WTC11 (cell line): ENCODE measurements at regions of chr11 and their contacts with region 1.

Region 1: DNA sequence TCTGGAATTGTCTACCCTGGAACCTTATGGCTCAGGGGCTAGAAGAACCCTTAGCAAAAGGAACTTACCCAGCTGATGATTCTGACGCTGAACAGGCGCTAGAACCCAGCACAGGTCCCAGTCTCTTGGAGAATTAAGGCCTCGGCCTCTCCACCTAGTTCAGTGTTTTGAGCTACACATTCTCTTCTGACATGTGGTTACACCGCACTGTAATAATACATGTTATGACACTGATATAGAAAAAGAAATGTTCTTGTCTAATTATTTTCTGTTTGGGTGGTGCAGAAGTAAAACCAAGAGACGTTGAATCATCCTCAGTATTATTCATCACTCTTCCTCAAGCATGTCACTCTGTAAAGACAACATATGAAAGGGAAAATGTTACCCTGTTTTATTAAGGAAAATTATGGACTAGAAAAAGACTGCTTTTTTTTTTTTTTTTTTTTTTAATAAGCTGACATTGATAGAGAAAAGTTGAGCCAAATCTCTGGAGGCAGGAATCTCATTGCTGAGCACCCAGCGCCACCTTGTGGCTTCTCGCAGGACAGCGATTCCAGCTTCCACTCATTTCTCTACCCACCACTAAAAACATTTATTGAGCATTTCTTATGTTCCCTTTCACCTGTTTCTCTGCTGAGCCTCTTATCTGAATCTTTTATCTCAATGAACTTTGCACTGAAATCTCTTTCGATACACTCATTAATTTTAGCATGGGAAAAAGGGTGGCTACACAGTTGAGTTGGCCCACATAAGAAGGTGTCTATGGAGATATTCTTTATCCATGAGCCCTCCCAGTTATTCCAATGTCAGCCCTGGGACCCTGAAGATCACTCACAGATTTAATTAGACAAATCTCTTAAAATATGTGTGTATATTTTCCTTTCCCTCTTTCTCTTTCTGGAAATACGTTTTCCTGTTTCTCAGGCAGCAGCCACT is 12.6 kb upstream of the APLNR start:
- DNase-seq: peak; percentile 74
- ATAC-seq: peak; percentile 15; the same call in 1 of the 2 replicates
- H3K4me3 Mint-ChIP-seq: no peak overlapping the region
- H3K27ac Mint-ChIP-seq: no peak overlapping the region
- H3K4me1 Mint-ChIP-seq: no peaks in the 10 kb centered on the region; the same call in 1 of the 2 replicates
- H3K27me3 Mint-ChIP-seq: no peaks in the 10 kb centered on the region
- CTCF ChIP-seq: peak; percentile 85

Region 2: DNA sequence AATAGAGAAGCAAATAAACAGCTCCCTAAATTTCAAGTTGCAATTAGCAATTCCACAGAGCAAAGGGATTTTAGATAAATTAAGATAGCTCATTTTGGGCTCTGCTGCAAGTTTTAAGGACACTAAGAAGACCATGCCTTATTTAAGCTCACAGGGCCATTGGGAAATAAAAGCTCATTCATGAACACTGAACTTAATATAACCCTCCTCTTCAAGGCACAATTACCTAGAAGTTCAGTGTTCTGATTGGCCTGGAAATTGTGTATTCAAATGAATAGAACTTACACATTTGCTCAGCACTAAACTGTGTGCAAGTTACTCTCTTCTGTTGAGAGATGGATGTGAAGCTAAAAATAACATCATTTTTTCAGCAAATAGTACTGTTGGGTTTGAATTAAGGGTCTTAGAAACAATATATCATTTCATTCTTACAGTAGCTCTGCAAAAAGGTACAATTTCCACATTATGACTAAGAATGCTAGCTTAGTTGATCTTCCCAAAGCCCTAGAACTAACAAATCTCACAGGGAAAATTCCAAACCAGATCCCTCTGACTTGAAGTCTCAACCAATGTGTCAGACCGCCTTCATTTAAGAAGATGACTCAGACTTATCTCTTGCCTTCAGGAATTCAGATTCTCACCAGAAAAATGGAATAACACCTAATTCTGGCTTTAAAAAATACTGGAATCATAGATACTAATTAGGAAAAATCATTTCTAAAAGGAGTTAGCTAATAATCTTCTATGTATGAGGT is 155.3 kb before region 1 on chr11:
- CTCF ChIA-PET with region 1: interaction called, 16 read pairs
- POLR2A ChIA-PET with region 1: no interaction called
- DNase-seq: no peak
- ATAC-seq: no peak
- H3K4me3 Mint-ChIP-seq: no peak overlapping the region
- H3K27ac Mint-ChIP-seq: no peak overlapping the region
- H3K4me1 Mint-ChIP-seq: no peaks in the 10 kb centered on the region
- H3K27me3 Mint-ChIP-seq: no peaks in the 10 kb centered on the region
- CTCF ChIP-seq: no peak

Region 3: GRCh38 chr11:57150454-57150917 is 99.2 kb before region 1 on chr11:
- CTCF ChIA-PET with region 1: interaction called, 31 read pairs
- POLR2A ChIA-PET with region 1: no interaction called
- DNase-seq: no peak
- ATAC-seq: no peak
- H3K4me3 Mint-ChIP-seq: no peak overlapping the region
- H3K27ac Mint-ChIP-seq: no peak overlapping the region
- H3K4me1 Mint-ChIP-seq: peaks cover 16% of the 10 kb centered on the region
- H3K27me3 Mint-ChIP-seq: no peaks in the 10 kb centered on the region; the same call in 1 of the 2 replicates
- CTCF ChIP-seq: no peak

Region 4: DNA sequence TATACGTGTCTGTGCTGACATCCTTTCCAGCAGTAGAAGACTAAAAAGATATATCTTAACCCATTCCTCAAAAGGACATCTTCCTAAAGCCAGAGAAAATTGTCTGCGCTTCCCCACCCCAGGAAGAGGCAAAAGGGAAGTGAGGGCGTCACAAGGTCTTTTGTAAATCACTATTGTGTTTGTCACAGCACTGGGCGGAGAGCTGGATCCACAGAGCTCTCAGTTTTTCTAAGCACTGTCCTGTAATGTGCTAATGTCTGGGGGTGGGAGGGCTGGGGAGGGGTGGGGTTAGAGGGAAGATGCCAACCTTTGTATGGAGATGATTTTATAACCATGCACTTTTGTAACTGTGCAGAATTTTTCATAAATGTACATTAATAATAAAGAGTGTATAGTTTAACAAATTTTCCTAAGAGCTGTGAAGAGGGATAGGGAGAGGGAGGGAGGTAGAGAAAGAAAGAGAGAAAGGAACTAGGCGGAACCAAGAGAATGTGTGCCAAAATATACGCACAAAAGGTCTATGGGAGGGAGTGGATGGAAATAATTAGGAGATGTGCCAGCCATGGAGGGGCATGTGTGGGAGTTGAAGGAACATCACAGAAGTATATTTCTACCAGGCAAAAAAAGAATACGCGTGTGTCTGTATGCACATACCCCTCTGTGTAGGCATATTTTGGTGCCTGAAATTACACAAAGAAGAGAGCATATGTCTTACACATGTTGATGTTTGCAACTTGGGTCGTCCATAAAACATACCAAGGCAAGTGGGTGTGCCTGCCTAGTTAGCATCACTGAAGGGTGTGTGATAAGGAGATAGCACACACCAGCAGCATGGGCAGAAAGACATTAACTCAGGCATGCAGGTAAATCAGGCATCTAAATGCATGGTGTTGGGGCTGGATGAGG is 58.1 kb before region 1 on chr11:
- CTCF ChIA-PET with region 1: interaction called, 11 read pairs
- POLR2A ChIA-PET with region 1: no interaction called
- DNase-seq: no peak
- ATAC-seq: peak; percentile 51
- H3K4me3 Mint-ChIP-seq: no peak overlapping the region
- H3K27ac Mint-ChIP-seq: no peak overlapping the region
- H3K4me1 Mint-ChIP-seq: peaks cover 24% of the 10 kb centered on the region
- H3K27me3 Mint-ChIP-seq: no peaks in the 10 kb centered on the region; the same call in 1 of the 2 replicates
- CTCF ChIP-seq: no peak

Region 5: GRCh38 chr11:57230791-57231538 is 18.7 kb before region 1 on chr11:
- CTCF ChIA-PET with region 1: interaction called, 72 read pairs
- POLR2A ChIA-PET with region 1: no interaction called
- DNase-seq: no peak
- ATAC-seq: peak; percentile 89
- H3K4me3 Mint-ChIP-seq: no peak overlapping the region
- H3K27ac Mint-ChIP-seq: no peak overlapping the region
- H3K4me1 Mint-ChIP-seq: peaks cover 22% of the 10 kb centered on the region
- H3K27me3 Mint-ChIP-seq: peaks cover 25% of the 10 kb centered on the region
- CTCF ChIP-seq: no peak

Region 6: DNA sequence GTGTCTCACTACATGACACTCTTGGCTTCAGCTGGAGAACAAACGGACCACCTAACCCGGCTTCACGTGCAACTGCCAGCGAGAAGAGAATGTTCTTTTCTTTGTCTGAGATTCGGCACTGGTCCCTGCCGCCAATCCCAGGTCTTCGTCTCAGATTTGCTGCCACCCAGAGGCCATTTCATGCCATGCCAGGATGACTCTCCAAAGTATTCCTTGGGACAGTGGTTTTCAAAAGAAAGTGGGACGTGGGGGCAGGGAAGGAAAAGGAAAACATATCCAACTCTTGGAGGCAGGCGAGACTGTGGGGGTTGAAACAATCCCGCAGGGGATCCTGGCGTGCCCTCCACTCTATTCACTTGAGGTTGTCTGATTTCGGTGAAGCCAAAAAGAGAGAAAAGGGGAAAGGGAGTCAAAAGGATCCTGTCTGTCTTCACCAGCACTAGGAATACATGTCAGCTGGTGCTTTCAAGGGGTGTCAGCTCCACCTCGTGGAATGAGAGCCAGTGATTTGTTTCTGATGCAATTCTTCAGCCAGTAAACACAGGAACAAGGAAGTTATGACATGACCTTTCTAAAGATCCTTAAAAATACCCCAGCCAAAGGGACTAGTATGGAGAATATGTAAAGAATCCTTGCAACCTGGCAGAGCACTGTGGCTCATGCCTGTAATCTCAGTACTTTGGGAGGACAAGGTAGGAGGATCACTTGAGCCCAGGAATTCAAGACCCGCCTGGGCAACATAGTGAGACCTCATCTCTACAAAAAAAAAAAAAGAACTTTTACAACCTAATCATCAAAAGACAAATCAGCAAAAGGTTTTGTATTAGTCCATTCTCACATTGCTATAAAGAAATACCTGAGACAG is 28.4 kb after region 1 on chr11:
- CTCF ChIA-PET with region 1: interaction called, 42 read pairs
- POLR2A ChIA-PET with region 1: no interaction called
- DNase-seq: peak; percentile 83
- ATAC-seq: peak; percentile 94
- H3K4me3 Mint-ChIP-seq: peak overlapping the region; percentile 50
- H3K27ac Mint-ChIP-seq: peak overlapping the region; percentile 67
- H3K4me1 Mint-ChIP-seq: peaks cover 24% of the 10 kb centered on the region
- H3K27me3 Mint-ChIP-seq: peaks cover 18% of the 10 kb centered on the region
- CTCF ChIP-seq: peak; percentile 68

Region 7: DNA sequence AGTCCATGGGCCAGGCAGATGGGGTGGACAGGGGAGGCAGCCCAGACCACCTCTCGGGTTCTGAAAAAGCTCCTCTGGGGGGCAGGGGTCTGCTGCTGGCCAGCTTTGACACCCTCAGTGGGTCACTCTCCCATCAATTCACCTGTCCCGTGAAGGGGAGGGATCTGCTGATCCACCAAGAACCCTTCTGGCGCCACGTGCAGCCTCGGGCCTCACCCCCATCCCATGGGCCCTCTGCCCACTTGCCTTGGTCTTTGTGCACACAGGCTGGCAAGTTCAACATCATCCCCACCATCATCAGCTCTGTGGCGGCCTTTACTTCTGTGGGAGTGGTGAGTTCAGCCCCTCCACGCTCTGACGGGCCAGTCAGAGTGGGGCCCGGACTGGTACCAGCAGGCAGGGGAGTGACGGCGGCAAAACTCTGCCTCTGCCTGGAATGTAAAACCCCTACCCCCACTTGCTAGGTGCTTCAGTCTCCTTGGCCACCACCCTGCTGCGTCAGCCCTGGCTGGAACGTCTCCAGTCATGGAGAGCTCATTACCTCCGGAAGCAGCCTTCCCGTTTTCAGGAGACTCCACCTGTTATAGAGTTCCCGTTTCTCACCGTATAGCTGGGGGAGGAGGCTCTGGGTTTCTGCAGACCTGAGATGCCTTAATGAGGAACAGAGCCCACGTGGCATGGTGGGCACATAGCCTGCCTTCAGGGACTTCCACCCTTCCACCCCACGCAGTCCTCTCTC is 118.6 kb after region 1 on chr11:
- CTCF ChIA-PET with region 1: no interaction called
- POLR2A ChIA-PET with region 1: no interaction called
- DNase-seq: no peak
- ATAC-seq: no peak
- H3K4me3 Mint-ChIP-seq: no peak overlapping the region
- H3K27ac Mint-ChIP-seq: peak overlapping the region; percentile 19; the same call in 1 of the 2 replicates
- H3K4me1 Mint-ChIP-seq: peaks cover 24% of the 10 kb centered on the region
- H3K27me3 Mint-ChIP-seq: peaks cover 1% of the 10 kb centered on the region; the same call in 1 of the 2 replicates
- CTCF ChIP-seq: no peak

Region 8: GRCh38 chr11:57885298-57886050 is 635.8 kb after region 1 on chr11:
- CTCF ChIA-PET with region 1: no interaction called
- POLR2A ChIA-PET with region 1: no interaction called
- DNase-seq: peak; percentile 46
- ATAC-seq: peak; percentile 58
- H3K4me3 Mint-ChIP-seq: no peak overlapping the region
- H3K27ac Mint-ChIP-seq: no peak overlapping the region
- H3K4me1 Mint-ChIP-seq: peaks cover 2% of the 10 kb centered on the region
- H3K27me3 Mint-ChIP-seq: no peaks in the 10 kb centered on the region
- CTCF ChIP-seq: no peak